ENCODE measurements at regions of chr5 and their contacts with region 1.

Region 1: DNA sequence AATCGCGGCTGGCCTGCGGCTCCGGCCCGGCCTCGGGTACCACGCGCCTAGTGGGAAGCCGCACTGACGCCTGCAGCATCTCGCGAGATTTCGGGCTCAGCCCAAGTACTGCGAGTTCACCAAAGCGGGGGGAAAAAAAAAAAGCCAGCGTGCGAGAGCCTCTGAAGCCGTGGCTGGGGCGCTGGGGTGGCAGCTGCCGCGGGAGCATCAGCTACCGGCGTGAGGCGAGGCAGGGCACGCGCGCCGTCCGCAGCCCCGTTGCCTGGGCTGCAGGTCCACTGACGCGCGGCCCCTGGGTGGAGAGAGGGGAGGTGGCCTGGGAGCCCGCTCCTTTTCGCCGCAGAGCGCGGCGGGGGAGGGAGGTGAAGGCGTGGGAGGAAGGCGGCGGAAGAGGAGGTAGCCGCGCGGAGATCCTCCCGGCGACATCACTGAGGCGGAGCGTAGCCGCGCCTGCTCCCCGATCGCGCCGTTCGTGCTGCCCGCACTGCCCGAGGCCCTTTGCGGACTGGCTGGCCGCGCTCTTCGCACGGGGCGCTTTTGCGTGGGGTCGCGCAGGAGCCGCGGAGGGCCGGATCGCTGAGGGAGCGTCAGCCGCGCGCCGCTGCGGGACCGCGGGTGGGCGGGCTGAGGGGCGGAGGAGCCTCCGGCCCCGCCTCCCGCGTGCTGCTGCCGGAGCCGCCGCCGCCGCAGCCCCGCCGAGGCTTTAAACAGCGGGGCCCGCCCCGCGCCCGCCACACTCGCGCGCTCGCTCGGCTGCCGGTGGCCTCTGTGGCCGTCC is at the start of gene SLC12A2:
- DNase-seq: peak; percentile 95
- ATAC-seq: peak; percentile 91 to 93
- total RNA-seq, gene SLC12A2: 13.2 to 20.1 TPM

Region 2: DNA sequence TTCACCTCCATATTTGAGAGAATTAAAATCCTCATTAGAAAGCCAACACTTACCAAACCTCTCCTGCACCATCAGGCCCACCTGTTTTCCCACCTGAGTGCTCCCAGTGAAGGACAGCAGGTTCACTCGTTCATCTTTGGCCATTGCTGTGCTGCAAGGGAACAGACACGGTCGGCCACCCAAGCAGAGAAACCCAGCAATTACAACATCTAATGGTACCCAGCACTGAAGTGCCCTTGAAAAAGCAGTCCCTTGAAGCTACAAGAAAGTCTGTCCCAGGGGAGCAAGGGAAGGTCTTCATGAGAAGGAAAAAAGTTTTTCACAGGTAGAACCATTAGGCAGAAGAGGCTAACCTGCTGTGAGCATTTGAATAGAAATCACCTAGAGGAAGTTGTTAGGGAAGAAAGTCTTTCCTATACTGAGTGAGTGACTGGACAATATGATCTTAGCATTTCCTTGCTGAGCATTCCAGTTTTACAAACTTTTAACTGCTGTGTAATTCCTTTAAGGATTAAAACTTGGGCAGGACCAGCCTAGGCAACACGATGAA is 1514.9 kb before region 1 on chr5:
- intact Hi-C with region 1: no loop called
- DNase-seq: no peak
- ATAC-seq: no peak

Region 3: DNA sequence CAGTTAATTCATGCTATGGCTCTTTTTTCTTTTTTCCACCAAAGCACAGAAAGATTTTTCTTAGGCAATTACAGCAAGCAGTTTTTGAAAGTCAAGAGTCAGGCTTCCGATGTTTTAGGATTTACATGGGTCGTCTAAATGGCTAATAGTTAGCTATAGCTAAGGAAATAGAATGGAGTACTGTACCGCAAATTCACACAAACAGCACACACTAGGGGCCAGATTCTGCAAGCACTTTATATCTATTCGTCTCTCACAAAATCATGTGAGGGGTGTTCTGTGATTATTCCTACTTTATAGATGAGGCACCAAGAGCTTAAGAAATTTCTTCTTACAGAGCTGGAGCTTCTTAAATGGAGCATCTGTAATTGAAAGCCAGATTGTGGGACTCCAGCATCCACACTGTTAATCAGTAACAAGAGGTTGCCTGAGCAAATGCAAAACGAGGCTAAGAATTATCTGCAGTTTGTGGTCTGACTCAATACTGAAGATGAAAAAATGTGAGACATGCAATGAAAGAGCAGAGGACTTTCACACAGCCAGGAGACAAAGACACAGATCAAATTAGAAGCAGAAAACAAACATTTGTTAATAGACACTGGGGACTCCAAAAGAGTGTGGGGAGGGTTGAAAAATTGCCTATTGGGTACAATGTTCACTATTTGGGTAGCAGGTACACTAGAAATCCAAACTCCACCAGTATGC is 497.0 kb before region 1 on chr5:
- intact Hi-C with region 1: no loop called
- DNase-seq: no peak
- ATAC-seq: no peak

Region 4: DNA sequence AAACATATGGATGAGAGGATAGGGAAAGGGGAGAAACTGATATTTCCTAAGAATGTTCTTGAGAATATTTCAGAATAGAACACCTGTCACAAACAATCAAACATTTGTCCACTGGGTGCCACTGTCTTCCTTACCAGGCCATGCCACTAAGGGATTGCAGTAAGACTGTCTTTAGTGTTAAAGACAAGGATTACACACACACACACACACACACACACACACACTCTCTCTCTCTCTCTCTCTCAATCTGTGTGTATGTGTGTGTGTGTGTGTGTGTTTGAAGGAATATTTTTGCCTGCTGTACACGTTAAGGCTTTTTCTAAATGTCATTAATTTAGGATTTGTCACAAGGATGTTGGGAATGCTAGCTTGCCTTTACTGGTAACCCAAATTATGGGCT is 325.6 kb before region 1 on chr5:
- intact Hi-C with region 1: loop called in 1 of 2 experiments (anchors 10 kb)
- DNase-seq: peak; percentile 23
- ATAC-seq: peak in 1 of 2 donors; percentile 51

Region 5: DNA sequence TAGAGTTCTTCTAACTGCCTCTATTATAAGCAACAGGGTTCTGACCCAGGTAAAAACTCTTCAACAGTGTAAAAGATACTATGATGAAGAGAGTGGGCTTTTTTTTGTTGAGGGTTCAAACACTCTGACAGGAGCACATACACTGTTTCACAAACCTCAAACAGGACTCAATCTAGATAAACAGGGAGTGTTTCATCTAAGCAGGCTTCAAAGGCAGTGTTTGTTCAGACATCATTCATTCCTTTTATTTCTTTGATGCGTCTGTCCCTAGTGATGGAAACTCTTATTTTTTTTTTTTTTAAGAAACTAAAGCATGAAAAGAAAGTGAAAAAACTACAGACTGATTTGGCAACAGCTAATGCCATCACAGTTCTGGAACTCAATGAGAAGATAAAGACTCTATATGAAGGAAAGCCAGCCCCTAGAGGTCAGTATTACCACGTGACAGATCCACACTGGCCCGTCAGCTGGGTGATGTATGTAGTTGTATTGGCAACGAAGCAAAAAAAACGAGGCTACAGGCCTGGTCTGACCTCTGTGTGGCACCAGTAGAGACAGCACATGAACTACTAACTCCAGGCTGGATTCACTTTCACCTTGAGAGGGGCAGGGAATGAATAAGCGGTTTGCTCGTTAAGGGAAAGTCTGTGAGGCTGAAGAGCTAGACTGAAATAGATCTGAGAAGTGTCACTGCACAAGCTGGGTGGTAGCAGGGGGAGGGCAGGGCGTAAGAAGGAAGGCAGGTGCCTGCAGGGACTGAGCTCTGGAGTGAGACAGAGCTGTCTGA is 207.8 kb before region 1 on chr5:
- intact Hi-C with region 1: loop called in 1 of 2 experiments (anchors 5 kb)
- DNase-seq: peak; percentile 37
- ATAC-seq: peak; percentile 74 to 92

Region 6: DNA sequence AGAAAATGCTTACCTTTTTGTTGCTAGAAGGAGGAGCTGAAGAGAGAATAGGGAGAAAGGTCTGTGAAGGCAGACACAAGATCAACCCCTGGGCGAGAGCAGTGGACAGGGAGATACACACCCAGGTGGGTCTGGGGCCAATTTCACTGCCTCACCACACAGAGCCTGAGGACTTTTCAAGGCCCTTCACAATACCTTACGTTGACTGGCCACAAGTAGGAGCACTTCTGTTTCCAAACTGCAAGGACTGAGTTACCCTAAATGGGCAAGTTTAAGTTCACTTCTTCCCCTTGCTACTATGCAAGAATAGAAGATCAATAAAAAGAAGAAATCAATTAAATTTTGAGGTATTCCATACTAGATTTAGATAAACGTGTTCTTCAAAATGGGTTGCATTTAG is 174.1 kb before region 1 on chr5:
- intact Hi-C with region 1: loop called in 1 of 2 experiments (anchors 10 kb)
- DNase-seq: no peak
- ATAC-seq: peak; percentile 60 to 70

Region 7: DNA sequence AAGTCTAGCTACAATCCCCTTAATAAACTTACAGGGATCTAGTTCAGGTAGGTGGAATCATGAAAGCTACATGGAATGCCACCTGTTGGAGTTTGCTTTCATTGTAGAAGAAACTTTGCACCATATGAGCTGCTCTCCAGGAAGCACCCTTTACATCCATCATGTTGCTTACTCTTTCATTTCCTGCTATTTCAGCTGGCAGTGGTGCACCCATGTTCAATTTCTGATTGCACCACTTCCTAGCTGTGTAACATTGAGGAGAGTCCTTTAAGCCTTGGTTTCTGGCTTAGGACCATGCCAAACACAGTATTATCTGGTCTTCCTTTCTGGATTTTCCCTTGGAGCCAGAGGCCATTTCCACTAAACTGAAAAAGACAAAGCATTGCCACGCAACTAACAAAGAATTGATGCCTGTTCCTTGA is 122.9 kb before region 1 on chr5:
- intact Hi-C with region 1: loop called in 1 of 2 experiments (anchors 5 kb)
- DNase-seq: no peak
- ATAC-seq: peak in 1 of 2 donors; percentile 52